Head of caudate nucleus (tissue), 42 donors: ENCODE measurements at regions of chr3 and their contacts with region 1.

Region 1: GRCh38 chr3:114454551-114455251 is 160.9 kb downstream of the TIGIT start:
- DNase-seq: peak in 37 of 42 donors; percentile 16 to 83 (median 54)

Region 2: GRCh38 chr3:114356066-114356465 is 98.6 kb before region 1 on chr3:
- intact Hi-C with region 1: no loop called
- DNase-seq: no peak

Region 3: DNA sequence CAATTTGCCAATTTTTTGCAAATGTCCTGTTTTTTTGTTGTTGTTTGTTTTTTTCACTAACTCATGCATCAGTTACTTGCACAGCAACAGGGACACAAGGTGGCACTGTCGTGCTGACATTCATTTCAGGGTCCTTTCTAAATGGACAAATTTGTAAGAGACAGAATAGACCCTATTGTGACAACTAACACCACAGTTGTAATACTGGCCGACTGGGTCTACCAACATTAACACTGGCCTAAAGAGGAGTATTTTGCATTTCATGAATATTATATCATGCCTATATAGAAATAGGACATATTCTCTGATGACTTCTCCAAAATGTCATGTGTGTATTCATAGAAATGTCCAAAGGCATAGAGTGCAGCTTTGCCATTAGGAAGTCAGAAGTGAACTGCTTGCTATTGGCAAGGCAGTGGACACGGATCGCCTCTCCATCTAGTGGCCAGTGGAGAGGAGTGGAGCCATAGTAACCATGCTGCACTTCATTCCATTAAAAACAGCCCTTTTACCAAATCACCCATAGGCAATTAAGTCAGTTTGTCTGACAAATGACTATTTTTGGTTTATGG is 637.6 kb after region 1 on chr3:
- intact Hi-C with region 1: loop called (anchors 10 kb)
- DNase-seq: peak; percentile 53 to 91 (median 81)